K562 (cell line): ENCODE measurements at regions of chr1 and their contacts with region 1.

Region 1: GRCh38 chr1:152654110-152654509 is 9.1 kb upstream of the LCE2D start:
- DNase-seq: peak; percentile 65 to 75 (median 70)
- ATAC-seq: peak; percentile 94
- H3K4me3 ChIP-seq: no peak overlapping the region
- H3K27ac ChIP-seq: no peak overlapping the region
- H3K4me1 ChIP-seq: no peaks in the 10 kb centered on the region
- H3K27me3 ChIP-seq: no peaks in the 10 kb centered on the region
- CTCF ChIP-seq: peak; percentile 78 to 83 (median 83)
- EP300 ChIP-seq: no peak
- POLR2A ChIP-seq: no peak
- RAD21 ChIP-seq: peak; percentile 42 to 54

Region 2: DNA sequence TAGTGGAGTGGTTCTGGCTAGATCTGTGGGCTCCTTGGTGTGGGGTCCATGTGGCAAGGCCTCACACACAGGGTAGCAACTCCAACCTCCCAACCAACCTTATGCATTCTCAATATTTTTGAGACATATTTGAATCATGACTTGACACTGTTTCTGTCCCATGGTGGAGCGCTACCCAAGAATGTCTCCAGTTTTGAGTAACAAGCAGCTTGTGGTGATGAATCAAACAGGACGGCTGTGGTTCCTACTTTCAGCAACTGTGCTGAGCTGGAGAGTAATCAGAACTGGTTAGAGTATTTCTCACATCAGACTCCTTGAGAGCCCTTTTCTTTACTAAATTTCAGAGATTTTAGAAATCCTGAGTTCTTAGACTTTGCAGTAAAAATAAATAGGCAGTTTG is 76.9 kb before region 1 on chr1:
- CTCF ChIA-PET with region 1: no interaction called
- POLR2A ChIA-PET with region 1: no interaction called
- in situ Hi-C with region 1: no loop called
- intact Hi-C with region 1: no loop called
- DNase-seq: no peak
- ATAC-seq: no peak
- H3K4me3 ChIP-seq: no peak overlapping the region
- H3K27ac ChIP-seq: no peak overlapping the region
- H3K4me1 ChIP-seq: no peaks in the 10 kb centered on the region
- H3K27me3 ChIP-seq: no peaks in the 10 kb centered on the region
- CTCF ChIP-seq: no peak
- EP300 ChIP-seq: no peak
- POLR2A ChIP-seq: no peak
- RAD21 ChIP-seq: no peak

Region 3: GRCh38 chr1:152745289-152745704 is 91.2 kb after region 1 on chr1:
- CTCF ChIA-PET with region 1: no interaction called
- POLR2A ChIA-PET with region 1: no interaction called
- in situ Hi-C with region 1: no loop called
- intact Hi-C with region 1: loop called (anchors 10 kb)
- DNase-seq: peak in 1 of 4 experiments; percentile 8
- ATAC-seq: peak; percentile 67
- H3K4me3 ChIP-seq: no peak overlapping the region
- H3K27ac ChIP-seq: no peak overlapping the region
- H3K4me1 ChIP-seq: no peaks in the 10 kb centered on the region
- H3K27me3 ChIP-seq: no peaks in the 10 kb centered on the region
- CTCF ChIP-seq: peak in 1 of 3 experiments; percentile 20; a peak in 1 of 6 replicates
- EP300 ChIP-seq: no peak
- POLR2A ChIP-seq: no peak
- RAD21 ChIP-seq: peak in 1 of 2 experiments; percentile 35; a peak in 2 of 4 replicates

Region 4: DNA sequence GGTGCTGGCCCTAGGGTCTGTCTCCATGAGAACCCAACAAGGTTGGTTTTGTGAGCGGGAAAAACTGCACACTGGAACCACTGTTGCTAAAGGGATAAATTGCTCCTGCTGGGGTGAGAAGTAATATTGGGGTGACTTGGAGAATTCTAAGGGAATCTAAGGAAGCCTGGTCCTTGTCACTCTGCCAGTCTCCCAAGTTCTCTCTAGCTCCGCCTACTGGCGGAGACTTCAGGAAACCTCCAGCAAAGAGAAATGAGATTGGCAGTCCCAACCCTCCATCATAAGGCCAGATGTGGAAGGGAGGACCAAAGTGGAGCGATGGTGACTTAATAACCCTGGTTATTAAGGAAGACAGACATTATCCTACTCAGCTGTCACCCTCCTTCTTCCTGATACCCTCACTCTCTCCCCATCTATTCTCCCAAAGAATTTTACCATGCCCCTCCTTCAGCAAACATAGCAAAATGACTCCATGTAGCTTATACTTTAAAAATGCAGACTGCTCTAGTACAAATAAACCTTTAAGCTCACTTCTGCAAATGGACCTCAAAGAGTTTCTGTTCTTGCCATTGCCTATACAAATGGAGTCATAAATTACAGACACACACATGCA is 123.5 kb after region 1 on chr1:
- CTCF ChIA-PET with region 1: interaction called, 3 read pairs
- POLR2A ChIA-PET with region 1: interaction called, 4 read pairs
- in situ Hi-C with region 1: no loop called
- intact Hi-C with region 1: loop called (anchors 1 kb)
- DNase-seq: peak; percentile 35 to 65 (median 42)
- ATAC-seq: peak; percentile 72
- H3K4me3 ChIP-seq: no peak overlapping the region
- H3K27ac ChIP-seq: no peak overlapping the region
- H3K4me1 ChIP-seq: no peaks in the 10 kb centered on the region
- H3K27me3 ChIP-seq: no peaks in the 10 kb centered on the region
- CTCF ChIP-seq: peak; percentile 56 to 68 (median 67)
- EP300 ChIP-seq: no peak
- POLR2A ChIP-seq: no peak
- RAD21 ChIP-seq: peak in 1 of 2 experiments; percentile 35; a peak in 2 of 4 replicates

Region 5: DNA sequence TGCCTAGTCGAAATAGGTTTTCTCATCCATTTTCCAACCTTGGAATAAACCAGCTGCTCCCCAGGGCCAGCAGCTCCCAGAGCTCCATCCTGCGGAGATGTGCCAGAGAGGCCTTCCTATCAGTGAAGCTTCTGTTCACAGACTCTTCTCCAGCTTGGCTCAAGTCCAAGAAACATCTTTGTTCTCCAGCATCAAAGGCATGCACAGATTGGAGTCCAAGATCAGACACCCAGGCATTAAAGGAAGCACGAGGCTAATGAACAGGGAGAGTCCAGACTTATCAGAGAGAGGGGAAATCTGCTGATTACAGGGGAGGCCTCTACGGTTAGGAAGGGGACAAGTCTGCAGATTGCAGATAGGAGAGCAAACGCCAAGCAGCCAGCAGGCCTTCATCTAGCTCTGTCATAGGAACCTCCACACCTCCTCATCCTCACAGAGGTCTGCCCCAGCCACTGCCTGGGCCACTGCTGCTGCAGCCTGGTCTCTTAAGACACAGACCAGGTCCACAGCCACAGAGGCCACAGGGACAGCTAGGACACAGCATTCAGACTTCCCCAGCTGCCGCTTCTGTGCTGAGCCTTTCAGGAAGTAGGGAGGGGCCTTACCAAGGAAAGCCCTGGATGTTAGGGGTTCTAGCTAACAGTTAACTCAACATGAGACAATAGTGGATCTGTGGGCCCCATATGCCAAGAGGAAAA is 566.6 kb after region 1 on chr1:
- CTCF ChIA-PET with region 1: interaction called, 3 read pairs
- POLR2A ChIA-PET with region 1: no interaction called
- in situ Hi-C with region 1: loop called (anchors 10 kb)
- intact Hi-C with region 1: loop called (anchors 5 kb)
- DNase-seq: peak in 2 of 4 experiments; percentile 14 to 33
- ATAC-seq: no peak; the same call in 2 of the 3 replicates
- H3K4me3 ChIP-seq: no peak overlapping the region
- H3K27ac ChIP-seq: no peak overlapping the region
- H3K4me1 ChIP-seq: no peaks in the 10 kb centered on the region; a peak in 1 of 5 replicates
- H3K27me3 ChIP-seq: peaks cover 2 to 18% of the 10 kb centered on the region in 2 experiments; a peak in 1 of 5 replicates
- CTCF ChIP-seq: no peak
- EP300 ChIP-seq: 0 out of 2 replicates have a peak, but pooled peaks have one; percentile 11
- POLR2A ChIP-seq: no peak
- RAD21 ChIP-seq: no peak